Heart right ventricle (tissue), 16 donors: ENCODE measurements at regions of chr1 and their contacts with region 1.

Region 1: GRCh38 chr1:26723013-26723991 is 27.5 kb downstream of the ARID1A start:
- DNase-seq: peak; percentile 74 to 95
- ATAC-seq: peak; percentile 97 to 99 (median 97)
- H3K4me3 ChIP-seq: peak overlapping the region in 6 of 10 donors; percentile 4 to 25 (median 7)
- H3K27ac ChIP-seq: peak overlapping the region in 9 of 10 donors; percentile 43 to 69 (median 62)
- H3K4me1 ChIP-seq: peaks cover 24 to 100% (median 94%) of the 10 kb centered on the region in 9 donors
- H3K27me3 ChIP-seq: no peaks in the 10 kb centered on the region
- CTCF ChIP-seq: peak in 1 of 9 donors; percentile 8

Region 2: DNA sequence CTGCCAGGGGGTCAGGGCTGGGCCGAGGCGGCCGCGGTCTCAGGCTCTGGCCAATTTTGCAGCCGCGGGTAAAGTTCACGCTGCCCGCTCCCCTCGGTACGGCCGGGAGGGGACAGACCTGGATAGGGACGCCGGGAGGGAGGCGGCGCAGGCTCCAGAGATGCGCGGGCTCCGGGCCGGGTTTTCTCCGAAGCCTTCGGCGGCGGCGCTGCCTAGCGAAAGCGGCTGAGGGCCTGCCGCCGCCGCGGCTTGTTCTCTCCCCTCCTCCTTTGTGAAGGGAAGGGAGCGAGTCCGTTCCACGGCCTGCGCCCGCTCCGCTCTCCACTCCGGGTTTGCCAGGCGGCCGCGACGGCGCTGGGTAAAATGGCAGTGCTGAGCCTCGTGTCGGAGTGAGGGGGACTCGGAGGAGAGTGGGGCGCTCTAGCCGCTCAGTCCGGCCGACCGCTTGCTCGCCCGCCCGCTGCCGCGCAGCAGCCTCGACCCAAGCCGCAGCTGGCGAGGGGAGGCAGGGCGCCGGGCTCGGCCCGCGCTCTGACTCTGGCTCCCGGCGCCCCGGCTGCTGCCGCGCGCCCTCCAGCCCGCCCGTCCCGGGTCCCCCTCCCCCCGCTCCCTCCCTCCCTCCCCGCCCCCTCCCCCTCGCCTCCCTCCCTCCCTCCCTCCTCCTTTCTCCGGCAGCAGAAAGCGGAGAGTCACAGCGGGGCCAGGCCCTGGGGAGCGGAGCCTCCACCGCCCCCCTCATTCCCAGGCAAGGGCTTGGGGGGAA is 27.8 kb before region 1 on chr1 and contains the start of gene ARID1A:
- intact Hi-C with region 1: loop called in 2 of 10 experiments (anchors 2 kb)
- DNase-seq: peak; percentile 95 to 97
- ATAC-seq: peak; percentile 71 to 82 (median 76)
- H3K4me3 ChIP-seq: peak within 1 kb of the TSS; percentile 72 to 96 (median 92)
- H3K27ac ChIP-seq: peak within 1 kb of the TSS; percentile 93 to 99 (median 98)
- H3K4me1 ChIP-seq: peaks cover 14 to 73% (median 52%) of the 10 kb centered on the region in 9 donors
- H3K27me3 ChIP-seq: no peaks in the 10 kb centered on the region
- CTCF ChIP-seq: peak in 4 of 9 donors; percentile 3 to 39 (median 20)
- total RNA-seq, gene ARID1A: 33.6 to 62.5 (median 45.7) TPM

Region 3: GRCh38 chr1:27816921-27817630 is 1093.8 kb after region 1 on chr1:
- intact Hi-C with region 1: no loop called
- DNase-seq: peak in 1 of 2 donors; percentile 26
- ATAC-seq: peak in 7 of 8 donors; percentile 61 to 92 (median 81)
- H3K4me3 ChIP-seq: no peak overlapping the region
- H3K27ac ChIP-seq: peak overlapping the region in 6 of 10 donors; percentile 4 to 67 (median 22)
- H3K4me1 ChIP-seq: peaks cover 0 to 18% (median 7%) of the 10 kb centered on the region in 9 donors
- H3K27me3 ChIP-seq: no peaks in the 10 kb centered on the region
- CTCF ChIP-seq: no peak